Ascending aorta (tissue), 2 donors: ENCODE measurements at regions of chr17 and their contacts with region 1.

Region 1: GRCh38 chr17:40317880-40318829 is 9.2 kb downstream of the RARA start:
- DNase-seq: peak; percentile 91 to 99
- H3K4me3 ChIP-seq: peak overlapping the region; percentile 70 to 86
- H3K27ac ChIP-seq: peak overlapping the region; percentile 90 to 91
- H3K4me1 ChIP-seq: peaks cover 43 to 88% of the 10 kb centered on the region in 2 donors
- H3K27me3 ChIP-seq: no peaks in the 10 kb centered on the region
- CTCF ChIP-seq: no peak

Region 2: DNA sequence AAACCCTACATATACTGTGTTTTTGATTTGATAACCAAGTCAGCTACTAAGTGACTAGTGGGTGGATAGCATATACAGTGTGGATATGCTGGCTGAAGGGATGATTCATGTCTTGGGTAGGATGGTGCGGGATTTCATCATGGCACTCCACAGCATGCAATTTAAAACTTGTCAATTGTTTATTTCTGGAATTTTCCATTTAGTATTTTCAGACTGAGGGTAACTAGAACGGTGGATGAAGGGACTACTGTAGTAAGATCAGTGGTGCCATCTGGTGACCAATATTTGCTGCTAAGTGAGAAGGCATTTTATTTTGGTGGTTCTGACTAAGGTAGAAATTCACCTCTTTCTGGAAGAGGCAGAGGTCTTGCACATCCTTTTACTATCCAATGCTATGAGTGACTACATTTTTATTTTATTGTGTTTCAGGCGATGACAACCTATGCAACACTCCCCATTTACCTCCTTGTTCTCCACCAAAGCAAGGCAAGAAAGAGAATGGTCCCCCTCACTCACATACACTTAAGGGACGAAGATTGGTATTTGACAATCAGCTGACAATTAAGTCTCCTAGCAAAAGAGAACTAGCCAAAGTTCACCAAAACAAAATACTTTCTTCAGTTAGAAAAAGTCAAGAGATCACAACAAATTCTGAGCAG is 27.4 kb before region 1 on chr17:
- intact Hi-C with region 1: no loop called
- DNase-seq: no peak
- H3K4me3 ChIP-seq: no peak overlapping the region
- H3K27ac ChIP-seq: no peak overlapping the region
- H3K4me1 ChIP-seq: peaks cover 0 to 8% of the 10 kb centered on the region in 2 donors
- H3K27me3 ChIP-seq: no peaks in the 10 kb centered on the region
- CTCF ChIP-seq: peak; percentile 16 to 49 (median 21)

Region 3: GRCh38 chr17:40331743-40332641 is 13.8 kb after region 1 on chr17:
- intact Hi-C with region 1: loop called (anchors 1 kb)
- DNase-seq: peak; percentile 72 to 95
- H3K4me3 ChIP-seq: peak overlapping the region; percentile 36 to 40
- H3K27ac ChIP-seq: peak overlapping the region; percentile 82
- H3K4me1 ChIP-seq: peaks cover 51 to 82% of the 10 kb centered on the region in 2 donors
- H3K27me3 ChIP-seq: no peaks in the 10 kb centered on the region
- CTCF ChIP-seq: no peak

Region 4: GRCh38 chr17:40340880-40341807 is 23.0 kb after region 1 on chr17:
- intact Hi-C with region 1: loop called (anchors 1 kb)
- DNase-seq: peak; percentile 88 to 98
- H3K4me3 ChIP-seq: peak overlapping the region; percentile 84 to 91
- H3K27ac ChIP-seq: peak overlapping the region; percentile 92 to 94
- H3K4me1 ChIP-seq: peaks cover 10 to 21% of the 10 kb centered on the region in 2 donors
- H3K27me3 ChIP-seq: no peaks in the 10 kb centered on the region
- CTCF ChIP-seq: no peak

Region 5: GRCh38 chr17:40450175-40450574 is 132.0 kb after region 1 on chr17:
- intact Hi-C with region 1: loop called (anchors 5 kb)
- DNase-seq: no peak
- H3K4me3 ChIP-seq: no peak overlapping the region
- H3K27ac ChIP-seq: peak overlapping the region; percentile 73 to 86
- H3K4me1 ChIP-seq: peaks cover 35 to 47% of the 10 kb centered on the region in 2 donors
- H3K27me3 ChIP-seq: no peaks in the 10 kb centered on the region
- CTCF ChIP-seq: peak in 2 of 3 experiments; percentile 29 to 32

Region 6: GRCh38 chr17:40803617-40804082 is 485.5 kb after region 1 on chr17:
- intact Hi-C with region 1: no loop called
- DNase-seq: peak; percentile 19 to 88
- H3K4me3 ChIP-seq: no peak overlapping the region
- H3K27ac ChIP-seq: no peak overlapping the region
- H3K4me1 ChIP-seq: no peaks in the 10 kb centered on the region
- H3K27me3 ChIP-seq: no peaks in the 10 kb centered on the region
- CTCF ChIP-seq: peak; percentile 74 to 84 (median 76)